Activated naive CD8-positive, alpha-beta T cell treated with anti-CD3 and anti-CD28 coated beads, Interleukin-2, amount 10 ng/mL, durations not matched to agents 7 days and 5 days (primary cell): ENCODE measurements at regions of chr14 and their contacts with region 1.

Region 1: DNA sequence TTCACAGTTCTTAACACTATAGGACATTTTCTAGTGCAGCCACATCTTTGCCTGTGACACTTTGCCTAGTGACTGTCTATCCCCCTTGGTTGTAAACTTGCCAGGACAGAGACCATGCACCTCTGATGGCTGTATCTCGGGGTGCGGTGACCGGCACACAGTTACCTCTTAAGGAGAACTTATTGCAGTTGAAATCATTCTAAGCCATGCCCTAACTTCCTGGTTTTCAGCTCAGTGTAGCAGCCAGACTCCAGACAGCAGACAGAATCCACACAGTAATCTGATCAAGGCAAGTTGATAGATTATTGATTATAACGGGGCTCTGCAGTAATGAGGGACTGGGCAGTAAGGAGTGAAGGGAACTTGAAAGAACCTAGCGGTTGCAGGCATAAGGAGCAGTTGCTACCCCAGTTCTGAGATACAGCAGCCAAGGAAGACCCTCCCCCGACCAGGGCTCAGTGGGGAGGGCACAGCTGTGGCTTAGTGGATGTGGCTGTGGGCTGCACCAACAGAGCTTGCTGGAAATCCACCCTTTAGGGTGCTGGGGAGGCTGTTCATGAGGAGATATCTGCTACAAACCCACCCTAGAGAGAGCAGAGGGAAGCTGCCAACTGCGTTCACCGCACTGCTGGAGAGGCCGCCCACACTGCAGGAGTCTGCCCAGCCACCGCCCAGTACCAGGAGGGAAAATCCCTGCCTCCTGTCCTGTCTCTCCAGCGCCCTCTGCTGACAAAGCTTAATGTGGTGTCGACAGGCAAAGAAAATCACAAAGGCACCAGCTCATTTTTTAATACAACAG is 58.2 kb upstream of the BEGAIN start:
- DNase-seq: peak; percentile 80
- ATAC-seq: peak; percentile 80
- H3K4me3 Mint-ChIP-seq: peak overlapping the region; percentile 72
- H3K27ac Mint-ChIP-seq: peak overlapping the region; percentile 86
- H3K4me1 Mint-ChIP-seq: peaks cover 54% of the 10 kb centered on the region
- H3K27me3 Mint-ChIP-seq: peaks cover 16% of the 10 kb centered on the region

Region 2: GRCh38 chr14:100547633-100548294 is 97.6 kb before region 1 on chr14:
- POLR2A ChIA-PET with region 1: interaction called, 15 read pairs
- DNase-seq: peak; percentile 57
- ATAC-seq: peak; percentile 24
- H3K4me3 Mint-ChIP-seq: peak overlapping the region; percentile 82
- H3K27ac Mint-ChIP-seq: peak overlapping the region; percentile 93
- H3K4me1 Mint-ChIP-seq: peaks cover 24% of the 10 kb centered on the region
- H3K27me3 Mint-ChIP-seq: peaks cover 1% of the 10 kb centered on the region

Region 3: GRCh38 chr14:100622708-100623485 is 22.5 kb before region 1 on chr14:
- POLR2A ChIA-PET with region 1: no interaction called
- DNase-seq: no peak
- ATAC-seq: no peak
- H3K4me3 Mint-ChIP-seq: no peak overlapping the region
- H3K27ac Mint-ChIP-seq: no peak overlapping the region
- H3K4me1 Mint-ChIP-seq: peaks cover 8% of the 10 kb centered on the region
- H3K27me3 Mint-ChIP-seq: peaks cover 34% of the 10 kb centered on the region

Region 4: DNA sequence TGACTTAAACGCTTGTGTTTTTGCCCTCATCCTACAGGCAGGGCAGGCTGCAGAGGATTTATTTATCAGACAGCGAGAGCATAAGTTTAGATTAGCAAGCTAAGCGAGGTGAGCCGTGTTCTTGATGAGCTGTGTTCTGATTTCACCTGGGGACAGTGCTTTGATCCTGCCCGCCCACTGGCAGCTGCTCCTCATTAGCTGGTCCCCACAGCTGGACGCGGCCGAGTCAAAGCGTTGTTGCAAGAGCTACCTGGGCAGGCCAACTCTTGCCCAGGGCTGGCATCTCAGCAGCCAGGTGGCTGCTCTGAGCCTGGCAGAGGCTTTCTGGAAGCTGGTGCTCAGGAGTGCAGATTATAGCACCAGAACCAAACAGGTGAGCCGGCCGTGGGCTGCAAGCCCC is 11.4 kb before region 1 on chr14:
- POLR2A ChIA-PET with region 1: no interaction called
- DNase-seq: no peak
- ATAC-seq: no peak
- H3K4me3 Mint-ChIP-seq: no peak overlapping the region
- H3K27ac Mint-ChIP-seq: no peak overlapping the region
- H3K4me1 Mint-ChIP-seq: peaks cover 4% of the 10 kb centered on the region
- H3K27me3 Mint-ChIP-seq: peaks cover 15% of the 10 kb centered on the region

Region 5: DNA sequence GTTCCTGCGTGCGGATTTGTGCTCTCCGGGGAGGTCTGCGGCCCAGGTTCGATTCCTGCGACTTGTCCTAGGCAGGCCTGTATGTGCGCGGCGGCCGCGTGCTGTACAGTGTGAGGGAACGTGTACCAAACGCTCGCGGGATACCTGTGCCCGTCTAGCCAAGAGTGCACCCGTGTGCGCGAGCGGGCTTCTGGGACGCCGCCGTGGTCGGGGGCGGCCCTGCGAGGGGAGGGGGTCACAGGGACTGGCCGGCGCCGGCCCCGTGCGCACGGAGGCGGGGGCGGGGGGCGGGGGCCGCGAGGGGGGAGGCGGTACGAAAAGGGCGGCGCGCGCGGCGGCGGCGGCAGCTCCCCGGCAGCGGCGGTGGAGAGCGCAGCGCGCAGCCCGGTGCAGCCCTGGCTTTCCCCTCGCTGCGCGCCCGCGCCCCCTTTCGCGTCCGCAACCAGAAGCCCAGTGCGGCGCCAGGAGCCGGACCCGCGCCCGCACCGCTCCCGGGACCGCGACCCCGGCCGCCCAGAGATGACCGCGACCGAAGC is 81.2 kb after region 1 on chr14 and contains the start of gene DLK1:
- POLR2A ChIA-PET with region 1: no interaction called
- DNase-seq: no peak
- ATAC-seq: no peak
- H3K4me3 Mint-ChIP-seq: no peak within 1 kb of the TSS
- H3K27ac Mint-ChIP-seq: no peak within 1 kb of the TSS
- H3K4me1 Mint-ChIP-seq: no peaks in the 10 kb centered on the region
- H3K27me3 Mint-ChIP-seq: peaks cover 30% of the 10 kb centered on the region
- total RNA-seq, gene DLK1: not detected